A549 (cell line): ENCODE measurements at regions of chr20 and their contacts with region 1.

Region 1: GRCh38 chr20:23937303-23938117 is 51.1 kb downstream of the GGTLC1 start:
- DNase-seq: peak; percentile 35 to 73
- ATAC-seq: peak; percentile 99 to 100
- H3K4me3 ChIP-seq: no peak overlapping the region
- H3K27ac ChIP-seq: no peak overlapping the region
- H3K4me1 ChIP-seq: no peaks in the 10 kb centered on the region
- CTCF ChIP-seq: peak; percentile 78
- EP300 ChIP-seq: no peak
- POLR2A ChIP-seq: no peak
- RAD21 ChIP-seq: peak; percentile 96

Region 2: GRCh38 chr20:23926976-23927872 is 10.3 kb before region 1 on chr20:
- CTCF ChIA-PET with region 1: interaction called, 25 read pairs
- POLR2A ChIA-PET with region 1: no interaction called
- DNase-seq: no peak
- ATAC-seq: no peak
- H3K4me3 ChIP-seq: no peak overlapping the region
- H3K27ac ChIP-seq: no peak overlapping the region
- H3K4me1 ChIP-seq: no peaks in the 10 kb centered on the region
- CTCF ChIP-seq: no peak
- EP300 ChIP-seq: no peak
- POLR2A ChIP-seq: no peak
- RAD21 ChIP-seq: no peak

Region 3: DNA sequence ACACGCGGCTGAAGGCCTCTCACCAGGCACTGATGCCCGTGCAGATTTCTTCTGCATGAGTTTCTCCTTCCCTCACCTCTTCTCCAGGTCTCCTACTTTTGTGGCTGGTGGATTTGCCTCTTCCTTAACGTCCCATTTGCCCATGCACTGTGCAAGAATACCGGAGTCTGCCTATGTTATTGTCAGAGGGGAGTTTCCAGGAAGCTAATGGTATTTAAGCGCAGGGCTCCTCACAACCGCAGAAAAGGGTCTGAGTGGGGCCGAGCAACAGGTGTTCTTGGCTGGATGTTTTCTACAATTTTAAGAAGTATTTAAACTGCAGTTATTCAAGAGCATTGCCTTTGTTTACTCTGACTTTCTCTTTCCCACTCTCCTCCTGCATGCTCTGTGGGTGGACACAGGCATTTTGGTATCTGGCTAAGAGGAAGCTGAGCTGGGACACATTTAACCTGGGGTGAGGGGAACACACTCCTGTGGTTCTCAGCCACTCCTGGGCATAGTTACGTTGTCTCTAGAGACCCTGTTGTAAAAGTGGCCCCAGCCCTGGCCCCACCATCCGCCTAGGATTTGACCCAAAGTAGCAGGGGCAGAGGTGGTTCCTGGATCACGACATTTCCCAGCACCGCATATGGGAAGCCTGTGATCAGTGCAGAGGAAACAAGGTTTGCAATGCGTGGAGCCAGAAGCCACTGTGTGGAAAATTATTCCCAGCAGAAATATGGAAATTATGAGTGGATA is 16.7 kb after region 1 on chr20:
- CTCF ChIA-PET with region 1: interaction called, 30 read pairs
- POLR2A ChIA-PET with region 1: no interaction called
- DNase-seq: no peak
- ATAC-seq: no peak
- H3K4me3 ChIP-seq: no peak overlapping the region
- H3K27ac ChIP-seq: no peak overlapping the region
- H3K4me1 ChIP-seq: no peaks in the 10 kb centered on the region
- CTCF ChIP-seq: no peak
- EP300 ChIP-seq: no peak
- POLR2A ChIP-seq: no peak
- RAD21 ChIP-seq: no peak

Region 4: DNA sequence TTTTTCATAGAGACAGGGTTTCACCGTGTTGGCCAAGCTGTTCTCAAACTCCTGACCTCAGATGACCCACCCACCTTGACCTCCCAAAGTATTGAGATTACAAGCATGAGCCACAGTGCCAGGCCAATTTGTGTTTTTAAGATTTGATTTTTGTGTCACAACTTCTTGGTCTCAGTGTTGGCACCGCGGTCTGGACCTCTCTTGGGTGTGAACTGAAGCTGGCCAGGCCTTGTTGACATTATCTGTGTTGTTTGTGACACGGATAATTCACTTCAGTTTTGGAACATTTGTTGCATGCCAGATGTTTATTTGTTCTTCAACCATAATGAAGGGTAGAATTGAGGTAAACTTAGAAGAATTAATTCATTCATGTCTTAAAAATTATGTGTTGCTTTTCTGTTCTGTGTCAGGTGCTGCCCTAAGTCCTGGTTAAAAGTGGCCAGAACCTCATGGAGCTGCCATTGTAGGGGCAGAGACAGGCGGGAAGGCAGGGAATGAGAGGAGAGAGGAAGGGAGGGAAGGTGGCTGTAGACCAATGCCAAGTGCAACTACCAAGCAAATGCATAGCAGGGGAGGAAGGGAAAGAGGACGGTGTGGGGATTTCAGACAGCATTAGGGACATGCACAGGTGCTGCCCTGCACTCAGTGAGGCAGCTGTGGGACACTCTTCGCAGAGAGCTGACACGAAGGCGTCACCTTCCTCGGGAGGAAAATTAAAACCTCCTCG is 29.9 kb after region 1 on chr20:
- CTCF ChIA-PET with region 1: interaction called, 15 read pairs
- POLR2A ChIA-PET with region 1: no interaction called
- DNase-seq: no peak
- ATAC-seq: no peak
- H3K4me3 ChIP-seq: no peak overlapping the region
- H3K27ac ChIP-seq: no peak overlapping the region
- H3K4me1 ChIP-seq: no peaks in the 10 kb centered on the region
- CTCF ChIP-seq: no peak
- EP300 ChIP-seq: no peak
- POLR2A ChIP-seq: no peak
- RAD21 ChIP-seq: no peak

Region 5: DNA sequence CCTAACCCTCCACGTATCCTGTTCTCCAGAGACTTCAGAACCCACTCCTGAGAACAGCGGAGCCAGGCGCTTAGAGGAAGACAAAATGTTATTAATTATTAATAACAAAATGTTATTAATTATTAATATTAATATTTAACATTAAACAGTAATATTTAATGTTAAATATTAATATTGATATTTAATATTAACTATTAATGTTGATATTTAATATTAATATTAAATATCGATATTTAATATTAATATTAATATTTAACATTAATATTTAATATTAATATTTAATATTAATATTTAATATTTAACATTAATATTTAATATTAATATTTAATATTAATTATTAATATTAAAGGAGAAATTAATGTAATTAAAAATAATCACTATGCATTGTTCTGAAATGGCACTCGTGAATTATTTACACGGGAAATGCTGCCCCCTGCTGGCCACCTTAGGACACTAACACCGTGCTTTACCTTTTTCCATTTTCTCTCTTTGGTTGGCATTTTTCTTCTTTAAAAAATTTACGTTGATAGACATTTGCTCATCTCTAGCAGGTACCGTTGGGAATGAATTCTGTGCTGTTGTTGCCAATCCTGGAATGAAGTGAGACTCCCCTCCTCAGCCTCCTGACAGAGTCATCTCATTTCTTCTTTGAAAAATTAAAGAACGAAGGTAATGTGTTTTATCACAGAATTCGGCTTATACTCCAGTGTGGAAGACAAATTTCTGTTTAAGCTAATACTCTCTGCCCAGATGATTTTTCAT is 58.6 kb after region 1 on chr20:
- CTCF ChIA-PET with region 1: interaction called, 10 read pairs
- POLR2A ChIA-PET with region 1: no interaction called
- DNase-seq: peak in 1 of 2 experiments; percentile 42
- ATAC-seq: peak in 1 of 2 experiments; percentile 58; a peak in 3 of 6 replicates
- H3K4me3 ChIP-seq: no peak overlapping the region
- H3K27ac ChIP-seq: no peak overlapping the region
- H3K4me1 ChIP-seq: no peaks in the 10 kb centered on the region
- CTCF ChIP-seq: peak; percentile 86
- EP300 ChIP-seq: no peak
- POLR2A ChIP-seq: no peak
- RAD21 ChIP-seq: peak; percentile 67 to 68

Region 6: DNA sequence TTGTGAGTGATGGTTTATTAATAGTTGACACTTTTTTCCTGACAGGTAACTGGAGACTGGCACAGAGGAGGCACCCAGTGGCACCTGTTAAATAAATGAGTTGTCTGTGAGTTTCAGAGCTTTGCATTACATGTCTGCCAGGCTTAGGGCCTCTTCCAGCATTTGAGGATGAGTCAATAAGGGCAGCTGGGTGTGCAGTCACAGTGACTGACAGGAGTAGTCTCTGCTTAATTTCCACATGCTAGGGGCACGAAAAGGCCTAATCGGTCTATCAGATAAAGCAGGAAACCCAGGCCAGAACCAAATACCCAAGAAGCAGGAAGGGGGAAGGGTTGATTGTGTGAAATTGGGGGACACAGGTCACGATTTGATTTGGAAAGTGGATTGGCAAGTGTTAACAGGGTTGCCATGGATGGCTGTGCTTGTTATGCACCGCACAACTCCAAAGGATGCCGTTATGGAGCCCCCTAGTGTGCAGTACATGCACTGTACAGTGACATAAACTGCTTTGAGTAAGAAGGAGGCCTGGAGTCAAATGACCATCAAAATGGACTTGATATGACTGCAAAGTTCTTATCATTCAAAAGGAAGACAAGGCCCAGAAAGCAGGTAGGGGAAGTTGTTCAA is 163.0 kb after region 1 on chr20:
- CTCF ChIA-PET with region 1: interaction called, 10 read pairs
- POLR2A ChIA-PET with region 1: no interaction called
- DNase-seq: peak in 1 of 2 experiments; percentile 77
- ATAC-seq: peak; percentile 76 to 88
- H3K4me3 ChIP-seq: no peak overlapping the region
- H3K27ac ChIP-seq: peak overlapping the region in 1 of 2 experiments; percentile 27; a peak in 1 of 6 replicates
- H3K4me1 ChIP-seq: peaks cover 41% of the 10 kb centered on the region
- CTCF ChIP-seq: peak; percentile 58
- EP300 ChIP-seq: no peak
- POLR2A ChIP-seq: no peak
- RAD21 ChIP-seq: peak; percentile 29 to 63; a peak in 3 of 5 replicates

Region 7: DNA sequence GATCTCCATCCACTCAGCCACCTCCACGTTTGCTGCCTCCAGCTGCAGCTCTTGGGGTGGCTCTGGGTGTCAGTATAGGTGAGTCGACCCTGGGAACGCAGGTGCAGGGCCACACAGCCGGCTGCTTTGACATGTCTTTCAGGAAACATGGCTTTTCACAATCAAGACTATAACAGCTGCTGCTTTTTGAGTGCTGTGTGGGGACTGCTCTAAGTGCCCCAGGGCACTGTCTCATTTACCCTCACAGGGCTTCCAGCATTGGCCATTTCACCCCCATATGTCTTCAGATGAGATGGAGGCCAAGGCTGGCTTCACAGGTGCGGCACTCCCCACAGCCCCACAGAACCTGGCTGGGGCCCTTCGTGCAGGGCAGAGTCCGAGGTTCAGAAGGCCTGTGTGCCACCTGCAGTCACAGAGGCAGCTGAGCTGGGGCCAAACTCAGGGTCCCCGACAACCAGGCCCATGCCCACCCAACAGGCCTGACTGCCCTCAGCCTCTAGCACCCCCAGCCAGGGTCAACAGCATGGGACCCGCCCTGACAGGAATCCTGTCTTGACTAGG is 996.7 kb after region 1 on chr20:
- CTCF ChIA-PET with region 1: interaction called, 19 read pairs
- POLR2A ChIA-PET with region 1: no interaction called
- DNase-seq: no peak
- ATAC-seq: no peak
- H3K4me3 ChIP-seq: no peak overlapping the region
- H3K27ac ChIP-seq: no peak overlapping the region
- H3K4me1 ChIP-seq: no peaks in the 10 kb centered on the region
- CTCF ChIP-seq: no peak
- EP300 ChIP-seq: no peak
- POLR2A ChIP-seq: no peak
- RAD21 ChIP-seq: no peak